ENCODE measurements at regions of chr12 and their contacts with region 1.

Region 1: DNA sequence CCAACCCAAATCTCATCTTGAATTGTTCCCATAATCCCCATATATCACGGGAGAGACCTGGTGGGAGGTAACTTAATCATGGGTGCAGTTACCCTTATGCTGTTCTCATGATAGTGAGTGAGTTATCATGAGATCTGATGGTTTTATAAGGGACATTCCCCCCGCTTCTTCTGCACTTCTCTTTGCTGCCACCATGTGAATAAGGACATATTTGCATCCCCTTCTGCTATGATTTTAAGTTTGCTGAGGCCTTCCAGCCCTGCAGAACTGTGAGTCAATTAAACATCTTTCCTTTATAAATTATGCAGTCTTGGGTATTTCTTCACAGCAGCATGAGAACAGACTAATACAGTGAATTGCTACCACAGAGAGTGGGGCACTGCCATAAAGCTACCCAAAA is 179.1 kb downstream of the LRIG3 start:
- DNase-seq: no peak
- ATAC-seq: no peak
- H3K4me3 ChIP-seq: no peak overlapping the region
- H3K4me3 Mint-ChIP-seq: no peak overlapping the region
- H3K27ac ChIP-seq: no peak overlapping the region
- H3K27ac Mint-ChIP-seq: no peak overlapping the region
- H3K4me1 ChIP-seq: no peaks in the 10 kb centered on the region
- H3K4me1 Mint-ChIP-seq: no peaks in the 10 kb centered on the region
- H3K27me3 ChIP-seq: no peaks in the 10 kb centered on the region
- H3K27me3 Mint-ChIP-seq: no peaks in the 10 kb centered on the region
- CTCF ChIP-seq: no peak

Region 2: GRCh38 chr12:58288190-58288589 is 453.0 kb before region 1 on chr12:
- CTCF ChIA-PET with region 1: no interaction called
- POLR2A ChIA-PET with region 1: no interaction called
- intact Hi-C with region 1: no loop called
- DNase-seq: no peak
- ATAC-seq: no peak
- H3K4me3 ChIP-seq: no peak overlapping the region
- H3K4me3 Mint-ChIP-seq: no peak overlapping the region
- H3K27ac ChIP-seq: no peak overlapping the region
- H3K27ac Mint-ChIP-seq: no peak overlapping the region
- H3K4me1 ChIP-seq: no peaks in the 10 kb centered on the region
- H3K4me1 Mint-ChIP-seq: no peaks in the 10 kb centered on the region
- H3K27me3 ChIP-seq: no peaks in the 10 kb centered on the region
- H3K27me3 Mint-ChIP-seq: peaks cover 16% of the 10 kb centered on the region
- CTCF ChIP-seq: no peak

Region 3: DNA sequence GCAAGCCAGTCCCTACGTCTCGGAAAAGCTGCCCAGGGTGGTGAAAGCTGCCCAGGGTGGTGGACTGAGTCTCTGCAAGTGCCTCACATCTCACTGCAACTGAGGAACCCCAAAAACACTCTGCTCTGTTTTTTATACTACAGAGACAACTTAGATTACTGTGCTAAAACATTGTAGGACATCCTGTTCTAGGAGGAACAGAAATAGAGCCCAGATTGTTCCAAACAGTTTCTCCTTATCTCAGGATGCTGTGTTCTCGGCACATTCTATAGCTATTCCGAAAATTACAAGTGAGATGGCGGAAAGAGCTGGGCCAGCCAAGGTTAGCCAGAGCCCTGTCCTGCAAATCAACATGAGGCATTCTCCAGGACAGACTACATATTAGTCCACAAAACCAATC is 40.4 kb after region 1 on chr12:
- CTCF ChIA-PET with region 1: no interaction called
- POLR2A ChIA-PET with region 1: no interaction called
- intact Hi-C with region 1: loop called (anchors 1 kb)
- DNase-seq: no peak
- ATAC-seq: no peak
- H3K4me3 ChIP-seq: no peak overlapping the region
- H3K4me3 Mint-ChIP-seq: no peak overlapping the region
- H3K27ac ChIP-seq: no peak overlapping the region
- H3K27ac Mint-ChIP-seq: no peak overlapping the region
- H3K4me1 ChIP-seq: no peaks in the 10 kb centered on the region
- H3K4me1 Mint-ChIP-seq: no peaks in the 10 kb centered on the region
- H3K27me3 ChIP-seq: no peaks in the 10 kb centered on the region
- H3K27me3 Mint-ChIP-seq: no peaks in the 10 kb centered on the region
- CTCF ChIP-seq: no peak